OCI-LY7 (cell line): ENCODE measurements at regions of chr10 and their contacts with region 1.

Region 1: DNA sequence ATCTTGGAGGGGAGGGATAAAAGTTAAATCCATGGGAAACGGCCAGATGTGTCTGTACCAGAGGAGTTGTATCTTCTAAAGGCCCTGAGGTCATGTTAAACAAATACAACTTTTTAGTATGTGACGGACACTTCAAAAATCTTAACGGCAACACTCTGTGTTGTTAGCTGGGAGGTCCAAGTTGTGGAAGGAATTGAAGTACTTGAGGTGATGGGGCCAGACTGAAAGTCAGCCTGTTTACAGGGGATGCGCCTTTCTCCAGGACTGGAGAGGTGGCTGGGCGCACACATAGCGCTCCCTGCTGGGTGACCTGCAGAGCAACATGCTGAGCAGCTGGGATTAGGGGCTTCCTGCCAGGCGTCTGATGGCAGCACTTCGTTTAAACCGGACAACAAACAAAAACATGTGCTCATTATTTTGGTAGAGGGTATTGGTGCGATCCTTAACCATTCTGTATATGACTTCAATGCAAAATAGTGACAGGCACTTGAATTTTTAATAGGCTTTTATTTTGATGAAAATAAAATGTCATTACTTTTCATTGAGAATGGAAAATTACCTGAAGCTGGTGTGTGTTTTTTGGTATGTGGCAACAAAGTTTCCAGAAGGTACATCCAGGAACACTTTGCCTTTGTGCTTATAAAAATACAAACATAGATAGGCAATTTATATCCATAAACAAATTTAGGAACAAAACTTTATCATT is 198.2 kb downstream of the MLLT10 start:
- DNase-seq: peak; percentile 57
- H3K4me3 ChIP-seq: no peak overlapping the region
- H3K27ac ChIP-seq: no peak overlapping the region
- H3K4me1 ChIP-seq: no peaks in the 10 kb centered on the region
- CTCF ChIP-seq: peak; percentile 87

Region 2: DNA sequence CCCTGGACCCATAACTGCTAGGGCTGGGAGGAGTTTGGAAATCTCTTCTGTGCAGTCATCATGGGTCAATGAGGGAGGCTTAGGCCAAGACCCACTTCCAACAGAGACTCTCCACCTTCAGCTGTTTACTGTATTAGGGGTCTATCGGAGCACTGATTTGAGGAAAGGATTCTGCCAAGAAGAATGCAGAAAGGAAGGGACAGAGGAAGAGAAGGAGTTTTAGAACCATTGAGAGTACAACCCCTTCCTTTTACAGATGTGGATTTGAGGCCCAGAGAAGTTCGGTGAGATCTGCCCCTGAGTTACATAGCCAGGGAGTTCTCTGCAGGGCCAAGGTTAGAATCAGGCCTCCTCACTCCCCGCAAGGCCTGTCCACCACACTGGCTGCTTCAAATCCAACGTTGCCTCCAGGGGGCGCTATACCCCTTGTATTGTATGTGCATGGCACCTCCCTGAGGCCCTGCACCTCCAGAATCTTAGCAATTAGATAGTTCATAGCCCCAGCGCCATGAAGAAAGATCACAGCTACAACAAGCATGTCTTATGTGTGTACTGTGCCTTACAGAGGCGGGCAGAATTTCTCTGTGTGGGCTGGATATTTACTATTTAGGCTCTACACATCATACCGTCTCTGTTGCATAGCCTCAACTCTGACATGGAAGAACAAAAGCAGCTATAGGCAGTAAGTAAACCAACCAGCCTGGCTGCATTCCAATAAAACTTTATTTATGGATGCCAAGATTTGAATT is 453.6 kb before region 1 on chr10:
- CTCF ChIA-PET with region 1: no interaction called
- POLR2A ChIA-PET with region 1: no interaction called
- intact Hi-C with region 1: loop called (anchors 10 kb)
- DNase-seq: peak; percentile 57
- H3K4me3 ChIP-seq: no peak overlapping the region
- H3K27ac ChIP-seq: no peak overlapping the region
- H3K4me1 ChIP-seq: no peaks in the 10 kb centered on the region
- CTCF ChIP-seq: peak; percentile 80

Region 3: GRCh38 chr10:21617267-21617666 is 115.0 kb before region 1 on chr10:
- CTCF ChIA-PET with region 1: no interaction called
- POLR2A ChIA-PET with region 1: no interaction called
- intact Hi-C with region 1: no loop called
- DNase-seq: no peak
- H3K4me3 ChIP-seq: no peak overlapping the region
- H3K27ac ChIP-seq: no peak overlapping the region
- H3K4me1 ChIP-seq: no peaks in the 10 kb centered on the region
- CTCF ChIP-seq: no peak

Region 4: DNA sequence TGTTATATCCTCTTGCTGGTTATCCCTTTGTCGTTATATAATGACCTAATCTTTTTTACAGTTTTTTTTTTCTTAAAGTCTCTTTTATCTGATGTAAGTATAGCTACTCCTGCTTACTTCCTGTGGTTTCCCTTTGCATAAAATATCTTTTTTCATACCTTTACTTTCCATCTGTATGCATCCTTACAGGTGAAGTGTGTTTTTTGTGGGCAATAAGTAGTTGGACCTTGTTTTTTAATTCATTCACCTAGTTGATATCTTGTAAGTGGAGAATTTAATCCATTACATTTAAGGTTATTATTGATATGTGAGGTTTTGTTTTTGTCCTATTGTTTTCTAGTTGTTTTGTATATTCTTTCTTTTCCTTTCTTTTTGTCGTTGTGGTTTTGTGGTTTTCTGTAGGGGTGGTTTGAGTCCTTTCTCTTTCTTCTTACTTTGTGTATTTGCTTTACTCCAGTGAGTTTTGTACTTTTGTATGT is 29.5 kb before region 1 on chr10:
- CTCF ChIA-PET with region 1: no interaction called
- POLR2A ChIA-PET with region 1: no interaction called
- intact Hi-C with region 1: no loop called
- DNase-seq: peak; percentile 44
- H3K4me3 ChIP-seq: peak overlapping the region; percentile 35
- H3K27ac ChIP-seq: peak overlapping the region; percentile 41
- H3K4me1 ChIP-seq: peaks cover 23% of the 10 kb centered on the region
- CTCF ChIP-seq: no peak

Region 5: GRCh38 chr10:21776883-21777282 is 44.7 kb after region 1 on chr10:
- CTCF ChIA-PET with region 1: no interaction called
- POLR2A ChIA-PET with region 1: no interaction called
- intact Hi-C with region 1: no loop called
- DNase-seq: no peak
- H3K4me3 ChIP-seq: no peak overlapping the region
- H3K27ac ChIP-seq: no peak overlapping the region
- H3K4me1 ChIP-seq: no peaks in the 10 kb centered on the region
- CTCF ChIP-seq: no peak